ENCODE measurements at regions of chr7 and their contacts with region 1.

Region 1: DNA sequence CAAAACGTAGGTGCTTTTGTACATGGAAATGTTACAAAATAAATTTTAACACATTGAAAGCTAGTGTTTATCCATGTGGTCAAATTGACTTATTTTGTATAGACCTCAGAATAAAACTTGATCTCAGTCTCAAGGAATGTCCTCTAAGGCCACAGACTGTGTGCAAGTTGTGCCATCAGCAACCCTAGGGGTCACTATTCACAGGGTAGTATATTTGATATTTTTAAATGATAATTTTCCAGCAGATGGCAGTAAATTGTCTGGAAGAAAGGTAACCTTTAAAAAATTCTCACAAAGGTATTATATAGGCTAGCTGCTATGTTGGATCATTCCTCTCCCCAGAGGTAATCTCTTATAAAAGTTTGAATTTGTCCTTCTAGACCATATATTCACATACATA is 12.9 kb upstream of the SNX10 start:
- DNase-seq: no peak
- ATAC-seq: no peak
- H3K4me3 ChIP-seq: no peak overlapping the region
- H3K27ac ChIP-seq: no peak overlapping the region
- H3K4me1 ChIP-seq: peaks cover 0 to 10% (median 0%) of the 10 kb centered on the region in 9 donors
- H3K27me3 ChIP-seq: no peaks in the 10 kb centered on the region
- CTCF ChIP-seq: peak in 3 of 9 donors; percentile 20 to 48 (median 37)

Region 2: GRCh38 chr7:25968205-25968993 is 310.4 kb before region 1 on chr7:
- intact Hi-C with region 1: no loop called
- DNase-seq: no peak
- ATAC-seq: peak in 1 of 8 donors; percentile 27
- H3K4me3 ChIP-seq: no peak overlapping the region
- H3K27ac ChIP-seq: no peak overlapping the region
- H3K4me1 ChIP-seq: peaks cover 0 to 12% (median under 1%) of the 10 kb centered on the region in 9 donors
- H3K27me3 ChIP-seq: peaks cover 0 to 53% (median 16%) of the 10 kb centered on the region in 7 donors
- CTCF ChIP-seq: no peak

Region 3: GRCh38 chr7:26216049-26216448 is 62.7 kb before region 1 on chr7:
- intact Hi-C with region 1: loop called in 1 of 10 experiments (anchors 10 kb)
- DNase-seq: no peak
- ATAC-seq: no peak
- H3K4me3 ChIP-seq: no peak overlapping the region
- H3K27ac ChIP-seq: no peak overlapping the region
- H3K4me1 ChIP-seq: peaks cover 0 to 5% (median 0%) of the 10 kb centered on the region in 9 donors
- H3K27me3 ChIP-seq: no peaks in the 10 kb centered on the region
- CTCF ChIP-seq: no peak

Region 4: GRCh38 chr7:26648554-26648953 is 369.8 kb after region 1 on chr7:
- intact Hi-C with region 1: no loop called
- DNase-seq: no peak
- ATAC-seq: no peak
- H3K4me3 ChIP-seq: no peak overlapping the region
- H3K27ac ChIP-seq: no peak overlapping the region
- H3K4me1 ChIP-seq: peaks cover 0 to 2% (median 0%) of the 10 kb centered on the region in 9 donors
- H3K27me3 ChIP-seq: peaks cover 0 to 9% (median 0%) of the 10 kb centered on the region in 7 donors
- CTCF ChIP-seq: no peak

Region 5: GRCh38 chr7:26944490-26945358 is 666.0 kb after region 1 on chr7:
- intact Hi-C with region 1: loop called in 1 of 10 experiments (anchors 5 kb)
- DNase-seq: no peak
- ATAC-seq: no peak
- H3K4me3 ChIP-seq: no peak overlapping the region
- H3K27ac ChIP-seq: no peak overlapping the region
- H3K4me1 ChIP-seq: no peaks in the 10 kb centered on the region
- H3K27me3 ChIP-seq: peaks cover 0 to 44% (median 19%) of the 10 kb centered on the region in 7 donors
- CTCF ChIP-seq: no peak